ENCODE measurements at regions of chr9 and their contacts with region 1.

Region 1: DNA sequence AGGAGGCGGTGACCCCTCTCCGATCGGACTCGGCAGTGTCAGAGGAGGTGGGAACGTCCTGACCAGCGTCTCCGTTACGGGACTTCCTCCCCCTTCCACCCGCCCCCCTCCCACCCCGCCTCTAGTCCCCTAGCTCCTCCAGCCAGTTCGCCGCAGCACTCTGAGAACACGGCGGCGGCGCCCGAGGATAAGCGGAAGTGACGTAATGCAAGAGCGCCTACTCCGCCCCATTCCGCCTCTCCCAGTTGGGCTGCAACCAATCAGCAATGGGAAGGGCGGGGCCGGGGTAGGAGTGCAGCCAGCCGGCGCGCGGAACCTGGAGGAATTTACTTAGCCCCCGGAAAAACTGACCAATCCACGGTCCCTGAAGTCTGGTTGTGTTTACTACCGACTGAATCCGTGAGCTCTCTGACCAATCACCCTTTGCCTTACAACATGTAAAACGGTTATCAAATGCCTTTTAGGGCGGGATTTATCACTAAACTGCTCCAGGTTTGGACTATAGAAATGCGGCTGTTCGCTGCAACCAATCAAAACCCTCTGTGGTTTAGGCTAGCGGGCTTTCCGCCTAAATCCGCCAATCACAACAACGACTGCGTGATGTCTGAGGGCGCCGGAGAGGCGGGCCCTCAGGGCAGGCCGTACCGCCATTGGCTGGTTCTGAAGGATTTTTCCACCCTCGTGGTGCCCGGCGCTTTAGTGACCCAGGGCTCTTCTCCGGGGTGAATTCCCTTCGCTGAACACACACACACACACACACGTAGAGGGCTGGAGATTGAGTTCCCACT is at the start of gene ZBTB5:
- DNase-seq: peak; percentile 99
- ATAC-seq: peak; percentile 93 to 95
- H3K4me3 ChIP-seq: peak within 1 kb of the TSS; percentile 66
- H3K27ac ChIP-seq: peak within 1 kb of the TSS; percentile 97
- H3K4me1 ChIP-seq: peaks cover 3% of the 10 kb centered on the region
- H3K27me3 ChIP-seq: no peaks in the 10 kb centered on the region
- total RNA-seq, gene ZBTB5: 6.8 to 9.1 (median 7.3) TPM

Region 2: GRCh38 chr9:37415011-37415719 is 50.3 kb before region 1 on chr9:
- intact Hi-C with region 1: loop called in 1 of 4 experiments (anchors 10 kb)
- DNase-seq: peak in 2 of 3 donors; percentile 58 to 81
- ATAC-seq: peak; percentile 50 to 66
- H3K4me3 ChIP-seq: no peak overlapping the region
- H3K27ac ChIP-seq: peak overlapping the region; percentile 12
- H3K4me1 ChIP-seq: peaks cover 5% of the 10 kb centered on the region
- H3K27me3 ChIP-seq: no peaks in the 10 kb centered on the region

Region 3: GRCh38 chr9:37422289-37423104 is 42.9 kb before region 1 on chr9 and contains the start of gene GRHPR:
- intact Hi-C with region 1: loop called in 2 of 4 experiments (anchors 2 to 10 kb)
- DNase-seq: peak; percentile 93 to 97 (median 96)
- ATAC-seq: peak; percentile 98 to 99
- H3K4me3 ChIP-seq: peak within 1 kb of the TSS; percentile 68
- H3K27ac ChIP-seq: peak within 1 kb of the TSS; percentile 78
- H3K4me1 ChIP-seq: peaks cover 11% of the 10 kb centered on the region
- H3K27me3 ChIP-seq: no peaks in the 10 kb centered on the region
- total RNA-seq, gene GRHPR: 92.2 to 119 (median 111) TPM

Measured in right cardiac atrium (tissue), 5 donors.